Common myeloid progenitor, CD34-positive (primary cell): ENCODE measurements at regions of chr16 and their contacts with region 1.

Region 1: DNA sequence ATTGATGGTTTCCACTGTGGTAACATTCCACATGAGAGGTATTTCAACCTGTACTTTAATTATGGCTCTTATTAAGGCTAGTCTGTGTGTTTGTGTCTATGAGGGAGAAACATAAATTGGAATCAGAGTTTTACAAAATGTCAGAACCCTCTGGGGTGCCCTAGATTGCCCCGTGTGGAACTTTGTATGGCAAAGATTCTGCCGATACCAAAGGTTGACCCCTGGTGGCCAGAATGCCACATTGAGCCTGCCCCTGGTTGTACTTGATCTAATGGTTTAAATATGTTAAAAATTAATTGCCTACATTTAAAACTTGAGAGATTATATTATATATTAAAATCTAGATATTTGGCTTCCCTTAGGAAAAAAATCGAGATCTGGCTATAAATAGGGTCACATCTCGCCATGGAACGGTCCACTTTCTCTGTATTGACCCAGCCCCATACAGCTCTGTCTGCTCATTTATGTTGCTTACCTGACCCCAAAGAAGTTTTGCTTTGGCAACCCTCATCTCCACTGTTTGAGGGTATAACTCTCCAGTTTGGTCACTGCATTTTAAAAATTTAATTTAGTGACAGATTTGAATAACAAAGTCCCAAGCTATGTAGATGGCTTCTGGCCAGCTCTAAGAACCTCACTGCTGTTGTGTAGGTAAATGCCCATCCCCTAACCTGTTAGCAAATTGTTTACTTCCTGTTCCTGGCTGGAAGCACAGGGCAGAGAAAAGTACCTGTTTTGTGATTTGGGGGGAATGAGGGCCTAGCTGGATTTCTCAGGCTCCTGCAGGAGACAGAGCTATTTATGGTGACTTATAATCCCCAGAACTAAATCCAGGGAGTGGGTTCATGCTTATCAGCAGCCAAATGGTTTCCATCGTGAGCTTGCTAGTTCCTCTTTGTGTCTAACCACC is 95.0 kb downstream of the PLCG2 start:
- DNase-seq: peak; percentile 78 to 86 (median 84)
- H3K4me3 ChIP-seq: no peak overlapping the region
- H3K27ac ChIP-seq: no peak overlapping the region
- H3K4me1 ChIP-seq: peaks cover 5 to 18% (median 11%) of the 10 kb centered on the region in 4 experiments
- H3K27me3 ChIP-seq: no peaks in the 10 kb centered on the region

Region 2: DNA sequence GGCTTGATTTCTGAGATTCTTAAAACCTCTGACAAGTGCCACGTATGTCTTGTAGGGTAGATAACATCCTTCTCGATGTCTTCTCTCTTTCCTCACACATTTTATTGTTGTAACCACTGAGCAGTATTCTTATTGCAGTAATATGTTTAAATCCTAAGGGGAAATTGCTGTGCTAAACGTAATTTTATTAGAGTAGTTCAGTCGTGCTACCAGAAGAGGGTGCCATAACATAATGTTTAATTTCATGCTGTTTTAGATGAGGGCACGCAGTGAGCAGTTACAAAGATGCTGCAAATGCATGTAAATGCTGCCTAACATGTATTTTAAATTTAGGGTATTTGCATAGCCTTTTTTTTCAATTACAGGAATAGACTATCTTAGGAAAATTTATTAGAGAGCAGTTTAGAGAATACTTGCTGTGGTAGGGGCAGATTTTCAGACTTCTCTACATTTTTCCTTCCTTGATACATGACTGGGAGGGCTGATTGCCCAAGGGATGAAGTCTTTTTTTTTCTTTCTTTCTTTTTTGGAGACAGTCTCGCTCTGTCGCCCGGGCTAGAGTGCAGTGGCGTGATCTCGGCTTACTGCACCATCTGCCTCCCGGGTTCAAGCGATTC is 507.7 kb before region 1 on chr16:
- CTCF ChIA-PET with region 1: interaction called, 10 read pairs
- POLR2A ChIA-PET with region 1: no interaction called
- DNase-seq: peak; percentile 55 to 82 (median 72)
- H3K4me3 ChIP-seq: no peak overlapping the region
- H3K27ac ChIP-seq: no peak overlapping the region
- H3K4me1 ChIP-seq: no peaks in the 10 kb centered on the region
- H3K27me3 ChIP-seq: no peaks in the 10 kb centered on the region

Region 3: GRCh38 chr16:81745704-81746558 is 128.2 kb before region 1 on chr16:
- CTCF ChIA-PET with region 1: interaction called, 16 read pairs
- POLR2A ChIA-PET with region 1: no interaction called
- DNase-seq: peak; percentile 68 to 93 (median 92)
- H3K4me3 ChIP-seq: peak overlapping the region; percentile 11 to 78 (median 48)
- H3K27ac ChIP-seq: peak overlapping the region in 1 of 2 experiments; percentile 44
- H3K4me1 ChIP-seq: peaks cover 14 to 66% (median 39%) of the 10 kb centered on the region in 4 experiments
- H3K27me3 ChIP-seq: no peaks in the 10 kb centered on the region

Region 4: DNA sequence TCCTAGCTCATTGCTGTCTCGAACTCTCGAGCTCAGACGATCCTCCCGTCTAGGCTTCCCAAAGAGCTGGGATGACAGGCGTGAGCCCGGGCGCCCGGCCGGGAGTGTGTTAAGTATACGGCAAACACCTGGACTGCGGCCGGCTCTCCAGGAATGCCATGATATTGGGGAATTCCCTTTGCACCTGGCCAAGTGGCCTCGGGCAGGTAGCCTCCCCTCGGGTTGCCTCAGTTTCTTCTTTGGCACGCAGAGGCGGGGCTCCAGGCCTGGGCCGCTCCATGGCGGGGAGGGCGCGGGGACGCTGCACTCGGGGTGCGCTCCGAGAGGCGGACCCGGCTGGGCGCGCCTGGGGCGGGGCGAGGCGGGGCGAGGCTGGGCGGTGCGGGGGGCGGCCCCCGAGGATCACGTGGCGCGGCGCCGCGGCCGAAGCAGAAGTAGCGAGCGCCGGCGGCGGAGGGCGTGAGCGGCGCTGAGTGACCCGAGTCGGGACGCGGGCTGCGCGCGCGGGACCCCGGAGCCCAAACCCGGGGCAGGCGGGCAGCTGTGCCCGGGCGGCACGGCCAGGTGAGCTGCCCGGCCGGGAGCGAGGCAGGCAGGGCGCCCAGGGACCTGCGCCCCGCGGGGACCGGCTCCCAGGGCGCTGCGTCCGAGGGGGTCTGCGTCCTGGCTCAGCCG is 95.1 kb before region 1 on chr16 and contains the start of gene PLCG2:
- CTCF ChIA-PET with region 1: interaction called, 15 read pairs
- POLR2A ChIA-PET with region 1: no interaction called
- DNase-seq: peak; percentile 62 to 85 (median 81)
- H3K4me3 ChIP-seq: peak within 1 kb of the TSS; percentile 68 to 91 (median 84)
- H3K27ac ChIP-seq: peak within 1 kb of the TSS in 1 of 2 experiments; percentile 61
- H3K4me1 ChIP-seq: peaks cover 10 to 63% (median 39%) of the 10 kb centered on the region in 4 experiments
- H3K27me3 ChIP-seq: no peaks in the 10 kb centered on the region

Region 5: GRCh38 chr16:81834868-81835267 is 39.2 kb before region 1 on chr16:
- CTCF ChIA-PET with region 1: interaction called, 10 read pairs
- POLR2A ChIA-PET with region 1: no interaction called
- DNase-seq: no peak
- H3K4me3 ChIP-seq: no peak overlapping the region
- H3K27ac ChIP-seq: no peak overlapping the region
- H3K4me1 ChIP-seq: peaks cover 25 to 81% (median 63%) of the 10 kb centered on the region in 4 experiments
- H3K27me3 ChIP-seq: no peaks in the 10 kb centered on the region

Region 6: DNA sequence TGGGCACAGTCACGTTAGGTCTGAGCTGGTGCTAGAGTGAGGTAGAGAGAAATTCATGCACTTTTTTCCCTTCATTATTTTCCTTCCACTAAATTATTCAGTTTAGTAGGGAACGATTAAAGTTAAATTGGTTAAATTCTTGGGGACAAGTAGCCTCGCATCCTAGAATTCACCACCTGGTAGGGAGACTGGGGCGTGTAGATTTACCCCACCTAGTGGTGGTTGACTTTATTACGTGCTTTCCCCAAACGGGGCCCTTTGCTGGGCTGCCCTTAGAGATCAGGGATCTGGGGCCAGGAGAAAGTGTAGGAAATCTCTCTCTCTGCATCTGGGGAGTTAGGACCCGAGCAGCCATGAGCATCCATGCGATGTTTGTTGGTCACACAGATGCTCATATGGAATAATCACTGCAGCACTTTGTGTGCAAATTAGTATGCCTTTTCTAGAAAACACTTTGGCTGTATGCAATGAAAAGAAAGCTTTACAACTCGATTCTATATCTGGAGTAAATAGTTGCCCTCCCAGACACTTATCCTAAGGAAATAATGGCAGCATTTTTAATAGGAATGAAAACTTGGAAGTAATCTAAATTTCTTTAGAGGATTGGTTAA is 12.0 kb after region 1 on chr16:
- CTCF ChIA-PET with region 1: interaction called, 33 read pairs
- POLR2A ChIA-PET with region 1: no interaction called
- DNase-seq: peak; percentile 19 to 41 (median 28)
- H3K4me3 ChIP-seq: no peak overlapping the region
- H3K27ac ChIP-seq: no peak overlapping the region
- H3K4me1 ChIP-seq: peaks cover 0 to 6% (median 5%) of the 10 kb centered on the region in 4 experiments
- H3K27me3 ChIP-seq: no peaks in the 10 kb centered on the region

Region 7: GRCh38 chr16:81921085-81921814 is 47.2 kb after region 1 on chr16:
- CTCF ChIA-PET with region 1: no interaction called
- POLR2A ChIA-PET with region 1: no interaction called
- DNase-seq: no peak
- H3K4me3 ChIP-seq: no peak overlapping the region
- H3K27ac ChIP-seq: no peak overlapping the region
- H3K4me1 ChIP-seq: no peaks in the 10 kb centered on the region
- H3K27me3 ChIP-seq: no peaks in the 10 kb centered on the region

Region 8: DNA sequence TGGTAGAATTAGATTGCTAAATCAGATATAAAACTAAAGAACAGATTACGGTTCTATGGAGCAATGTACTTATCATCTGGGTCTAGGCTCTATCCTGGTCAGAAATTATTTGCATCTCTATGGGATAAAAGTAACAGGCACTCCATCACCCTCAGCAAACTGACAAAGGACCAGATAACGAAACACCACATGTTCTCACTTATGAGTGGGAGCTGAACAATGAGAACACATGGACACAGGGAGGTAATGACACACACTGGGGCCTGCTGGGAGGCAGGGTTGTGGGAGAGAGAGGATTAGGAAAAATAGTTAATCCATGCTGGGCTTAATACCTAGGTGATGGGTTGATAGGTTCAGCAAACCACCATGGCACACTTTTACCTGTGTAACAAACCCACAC is 234.0 kb after region 1 on chr16:
- CTCF ChIA-PET with region 1: no interaction called
- POLR2A ChIA-PET with region 1: no interaction called
- DNase-seq: no peak
- H3K4me3 ChIP-seq: no peak overlapping the region
- H3K27ac ChIP-seq: no peak overlapping the region
- H3K4me1 ChIP-seq: no peaks in the 10 kb centered on the region
- H3K27me3 ChIP-seq: peaks cover 0 to 4% (median 0%) of the 10 kb centered on the region in 5 experiments